Naive thymus-derived CD4-positive, alpha-beta T cell (primary cell): ENCODE measurements at regions of chr10 and their contacts with region 1.

Region 1: GRCh38 chr10:97849687-97850402 is at the start of gene GOLGA7B:
- DNase-seq: peak; percentile 43 to 70 (median 66)
- ATAC-seq: peak; percentile 87
- H3K4me3 ChIP-seq: peak within 1 kb of the TSS; percentile 74
- H3K4me3 Mint-ChIP-seq: peak within 1 kb of the TSS; percentile 84 to 94 (median 90)
- H3K27ac ChIP-seq: peak within 1 kb of the TSS; percentile 61
- H3K27ac Mint-ChIP-seq: peak within 1 kb of the TSS; percentile 70 to 93 (median 87)
- H3K4me1 ChIP-seq: peaks cover 25 to 32% of the 10 kb centered on the region in 2 donors
- H3K4me1 Mint-ChIP-seq: peaks cover 21 to 49% (median 37%) of the 10 kb centered on the region in 7 donors
- H3K27me3 ChIP-seq: no peaks in the 10 kb centered on the region
- H3K27me3 Mint-ChIP-seq: peaks cover 0 to 4% (median 0%) of the 10 kb centered on the region in 5 donors
- total RNA-seq, gene GOLGA7B: 5.8 to 8.5 (median 6.5) TPM

Region 2: GRCh38 chr10:97714048-97714371 is 135.8 kb before region 1 on chr10:
- CTCF ChIA-PET with region 1: no interaction called
- POLR2A ChIA-PET with region 1: no interaction called
- intact Hi-C with region 1: no loop called
- DNase-seq: peak in 8 of 9 donors; percentile 28 to 67 (median 40)
- ATAC-seq: peak; percentile 83
- H3K4me3 ChIP-seq: peak overlapping the region; percentile 69
- H3K4me3 Mint-ChIP-seq: peak overlapping the region; percentile 95 to 100 (median 99)
- H3K27ac ChIP-seq: no peak overlapping the region
- H3K27ac Mint-ChIP-seq: peak overlapping the region in 7 of 9 donors; percentile 44 to 95 (median 80)
- H3K4me1 ChIP-seq: peaks cover 5 to 6% of the 10 kb centered on the region in 2 donors
- H3K4me1 Mint-ChIP-seq: peaks cover 5 to 21% (median 11%) of the 10 kb centered on the region in 7 donors
- H3K27me3 ChIP-seq: no peaks in the 10 kb centered on the region
- H3K27me3 Mint-ChIP-seq: peaks cover 14 to 43% (median 19%) of the 10 kb centered on the region in 5 donors

Region 3: GRCh38 chr10:97827778-97828291 is 22.0 kb before region 1 on chr10:
- CTCF ChIA-PET with region 1: interaction called, 4 read pairs
- POLR2A ChIA-PET with region 1: interaction called, 10 read pairs
- intact Hi-C with region 1: no loop called
- DNase-seq: no peak
- ATAC-seq: no peak
- H3K4me3 ChIP-seq: no peak overlapping the region
- H3K4me3 Mint-ChIP-seq: no peak overlapping the region
- H3K27ac ChIP-seq: no peak overlapping the region
- H3K27ac Mint-ChIP-seq: peak overlapping the region in 4 of 9 donors; percentile 21 to 81 (median 59)
- H3K4me1 ChIP-seq: peaks cover 7 to 16% of the 10 kb centered on the region in 2 donors
- H3K4me1 Mint-ChIP-seq: peaks cover 11 to 32% (median 20%) of the 10 kb centered on the region in 7 donors
- H3K27me3 ChIP-seq: no peaks in the 10 kb centered on the region
- H3K27me3 Mint-ChIP-seq: peaks cover 0 to 2% (median 0%) of the 10 kb centered on the region in 5 donors

Region 4: GRCh38 chr10:98196985-98197384 is 347.1 kb after region 1 on chr10:
- CTCF ChIA-PET with region 1: no interaction called
- POLR2A ChIA-PET with region 1: no interaction called
- intact Hi-C with region 1: no loop called
- DNase-seq: no peak
- ATAC-seq: no peak
- H3K4me3 ChIP-seq: no peak overlapping the region
- H3K4me3 Mint-ChIP-seq: peak overlapping the region in 1 of 10 donors; percentile 40
- H3K27ac ChIP-seq: no peak overlapping the region
- H3K27ac Mint-ChIP-seq: no peak overlapping the region
- H3K4me1 ChIP-seq: no peaks in the 10 kb centered on the region
- H3K4me1 Mint-ChIP-seq: peaks cover 9 to 40% (median 24%) of the 10 kb centered on the region in 7 donors
- H3K27me3 ChIP-seq: no peaks in the 10 kb centered on the region
- H3K27me3 Mint-ChIP-seq: no peaks in the 10 kb centered on the region